PC-3 (cell line): ENCODE measurements at regions of chr5 and their contacts with region 1.

Region 1: DNA sequence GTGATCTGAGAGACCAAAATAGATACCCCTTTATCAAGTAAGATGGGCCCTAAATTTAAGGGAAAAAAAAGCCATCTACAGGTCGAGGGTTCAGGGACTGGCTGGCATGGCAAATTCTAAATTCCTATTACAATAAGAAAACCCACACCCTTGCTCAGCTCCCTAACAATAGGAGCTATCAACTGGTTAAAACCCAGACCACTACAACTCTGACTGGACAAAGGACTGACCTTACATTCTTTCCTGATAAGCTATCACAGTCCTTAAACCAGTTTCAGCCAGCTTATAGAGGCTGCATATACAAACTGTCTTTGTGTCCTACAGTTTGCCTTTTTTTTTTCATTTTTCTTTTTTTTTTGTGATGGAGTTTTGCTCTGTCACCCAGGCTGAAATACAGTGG is 803.6 kb downstream of the NR2F1-AS1 start:
- DNase-seq: no peak
- ATAC-seq: no peak
- H3K4me3 ChIP-seq: no peak overlapping the region
- H3K27ac ChIP-seq: no peak overlapping the region
- H3K4me1 ChIP-seq: peaks cover 10% of the 10 kb centered on the region; the same call in 1 of the 2 replicates
- H3K27me3 ChIP-seq: no peaks in the 10 kb centered on the region
- CTCF ChIP-seq: no peak

Region 2: GRCh38 chr5:91727463-91727862 is 1050.0 kb before region 1 on chr5:
- CTCF ChIA-PET with region 1: no interaction called
- POLR2A ChIA-PET with region 1: interaction called, 10 read pairs
- intact Hi-C with region 1: no loop called
- DNase-seq: no peak
- ATAC-seq: no peak
- H3K4me3 ChIP-seq: no peak overlapping the region
- H3K27ac ChIP-seq: no peak overlapping the region
- H3K4me1 ChIP-seq: no peaks in the 10 kb centered on the region
- H3K27me3 ChIP-seq: no peaks in the 10 kb centered on the region
- CTCF ChIP-seq: no peak